ENCODE measurements at regions of chr10 and their contacts with region 1.

Region 1: DNA sequence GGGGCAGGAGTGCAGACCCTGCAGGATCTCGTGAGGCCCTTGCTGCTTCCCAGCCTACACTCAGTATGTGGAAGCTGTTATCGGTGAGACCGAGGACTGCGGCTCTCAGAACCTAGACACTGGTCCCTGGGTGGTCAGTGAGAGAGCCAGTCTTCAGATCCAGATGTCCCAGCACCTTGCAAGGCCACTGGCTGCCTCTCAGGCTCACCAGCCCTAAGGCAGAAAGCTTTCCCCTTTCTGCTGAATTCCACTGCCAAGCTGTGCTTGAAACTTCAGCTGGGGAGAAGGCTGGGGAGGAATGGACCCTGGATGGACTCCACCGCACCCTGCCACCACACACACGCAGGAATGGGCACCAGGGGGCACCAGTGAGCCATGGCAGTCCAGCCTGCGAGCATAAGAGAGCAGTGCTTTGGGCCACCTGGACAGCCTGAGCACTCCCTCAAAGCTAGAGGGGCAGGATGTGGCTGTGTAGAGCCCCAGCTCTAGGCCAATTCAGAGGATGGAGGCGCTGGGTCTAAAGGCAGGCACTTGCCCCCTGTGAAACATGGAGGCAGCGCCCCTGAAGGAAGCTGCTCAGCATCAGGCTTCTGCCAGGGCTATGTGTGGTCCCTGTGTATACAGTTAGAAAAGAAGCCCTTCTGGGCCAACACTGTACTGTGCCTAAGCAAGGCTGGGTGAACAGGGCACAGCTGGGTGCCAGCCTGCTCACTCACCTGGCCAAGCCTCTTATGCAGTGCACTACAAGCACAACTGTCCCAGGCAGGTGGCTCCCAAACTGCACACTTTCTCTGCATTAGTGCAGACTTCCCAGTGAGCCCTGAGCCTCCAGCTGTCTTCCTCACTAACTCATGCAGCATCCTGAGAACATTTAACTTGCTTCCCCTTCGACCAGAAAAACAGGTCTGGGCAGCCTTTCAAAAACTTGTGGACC is 21.6 kb downstream of the TMEM72 start:
- DNase-seq: peak; percentile 91
- H3K4me3 Mint-ChIP-seq: no peak overlapping the region
- H3K27ac Mint-ChIP-seq: no peak overlapping the region
- H3K4me1 Mint-ChIP-seq: peaks cover 7% of the 10 kb centered on the region
- H3K27me3 Mint-ChIP-seq: peaks cover 4% of the 10 kb centered on the region

Region 2: DNA sequence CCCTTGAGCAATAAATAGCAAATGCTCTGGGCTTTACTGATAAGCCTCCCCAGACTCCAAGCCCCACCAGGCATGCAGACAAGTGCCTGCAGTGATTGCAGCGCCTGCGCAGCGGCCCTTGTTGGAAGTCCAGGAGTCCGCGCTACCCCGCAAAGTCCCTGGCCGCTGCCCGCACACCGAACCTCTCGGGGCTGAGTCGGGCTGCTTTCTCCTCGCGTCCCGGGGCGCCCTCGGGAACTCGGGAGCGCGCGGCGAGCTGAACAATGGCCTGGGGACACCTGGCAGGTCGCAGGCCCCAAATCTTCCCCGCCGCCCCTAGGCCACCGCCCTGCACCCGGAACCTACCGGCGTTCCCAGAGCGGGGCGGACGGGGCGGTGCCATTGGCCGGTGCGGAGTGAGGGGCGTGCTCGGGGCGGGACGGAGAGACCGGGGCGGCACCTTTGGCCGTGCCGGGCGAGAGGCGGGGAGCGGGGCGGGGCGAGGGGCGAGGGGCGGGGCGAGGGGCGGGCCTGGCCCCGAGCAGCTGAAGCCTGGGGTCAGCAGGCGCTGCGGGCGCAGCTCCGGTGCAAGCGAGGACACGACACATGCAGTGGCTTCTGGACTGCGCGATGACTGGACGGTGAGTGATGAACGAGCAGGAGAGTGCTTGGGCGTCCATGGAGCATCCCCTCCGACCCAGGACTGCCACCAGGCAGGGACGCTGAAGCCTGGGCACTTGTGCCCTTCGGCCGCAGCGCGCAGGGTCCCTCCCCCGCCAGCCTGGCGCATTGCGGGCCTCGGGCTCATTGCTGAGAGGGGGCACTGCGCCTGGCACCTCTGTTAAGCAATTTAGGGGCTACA is 26.7 kb after region 1 on chr10 and contains the start of gene RASSF4:
- CTCF ChIA-PET with region 1: interaction called, 5 read pairs
- intact Hi-C with region 1: loop called (anchors 2 kb)
- DNase-seq: peak; percentile 94
- H3K4me3 Mint-ChIP-seq: peak within 1 kb of the TSS; percentile 80
- H3K27ac Mint-ChIP-seq: peak within 1 kb of the TSS; percentile 48
- H3K4me1 Mint-ChIP-seq: peaks cover 18% of the 10 kb centered on the region
- H3K27me3 Mint-ChIP-seq: no peaks in the 10 kb centered on the region
- total RNA-seq, gene RASSF4: 1.1 to 2.2 TPM

Region 3: GRCh38 chr10:44974628-44975431 is 42.0 kb after region 1 on chr10:
- CTCF ChIA-PET with region 1: interaction called, 35 read pairs
- intact Hi-C with region 1: loop called (anchors 1 kb)
- DNase-seq: peak; percentile 62
- H3K4me3 Mint-ChIP-seq: peak overlapping the region; percentile 49
- H3K27ac Mint-ChIP-seq: peak overlapping the region; percentile 65
- H3K4me1 Mint-ChIP-seq: peaks cover 20% of the 10 kb centered on the region
- H3K27me3 Mint-ChIP-seq: no peaks in the 10 kb centered on the region

Region 4: DNA sequence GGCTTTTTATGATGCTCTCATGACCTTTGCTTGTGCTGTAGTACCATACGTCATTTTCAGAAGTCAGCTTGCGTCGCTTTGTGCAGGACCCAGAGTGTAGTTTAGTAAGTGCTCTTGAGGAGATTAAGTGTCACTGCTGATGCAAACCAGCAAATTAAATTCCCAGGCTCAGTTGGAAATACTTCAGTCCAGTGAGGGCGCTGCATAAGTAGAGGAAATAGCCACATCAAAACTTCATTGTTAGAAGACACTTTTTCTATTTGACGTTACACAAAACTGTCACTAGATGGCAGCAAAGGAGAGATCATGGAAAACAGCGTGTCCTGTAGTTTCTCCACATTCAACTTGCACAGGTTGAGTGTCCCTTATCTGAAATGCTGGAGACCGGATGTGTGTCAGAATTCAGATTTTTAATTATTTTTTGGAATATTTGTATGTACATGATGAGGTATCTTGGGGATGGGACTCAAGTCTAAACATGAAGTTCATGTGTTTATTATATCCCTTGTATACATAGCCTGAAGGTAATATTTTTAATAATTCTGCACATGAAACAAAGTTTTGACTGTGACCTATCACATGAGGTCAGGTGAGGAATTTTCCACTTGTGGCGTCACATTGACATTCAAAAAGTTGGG is 75.9 kb after region 1 on chr10:
- CTCF ChIA-PET with region 1: interaction called, 16 read pairs
- intact Hi-C with region 1: no loop called
- DNase-seq: peak; percentile 33
- H3K4me3 Mint-ChIP-seq: no peak overlapping the region
- H3K27ac Mint-ChIP-seq: no peak overlapping the region
- H3K4me1 Mint-ChIP-seq: no peaks in the 10 kb centered on the region
- H3K27me3 Mint-ChIP-seq: no peaks in the 10 kb centered on the region